ENCODE measurements at regions of chr7 and their contacts with region 1.

Region 1: DNA sequence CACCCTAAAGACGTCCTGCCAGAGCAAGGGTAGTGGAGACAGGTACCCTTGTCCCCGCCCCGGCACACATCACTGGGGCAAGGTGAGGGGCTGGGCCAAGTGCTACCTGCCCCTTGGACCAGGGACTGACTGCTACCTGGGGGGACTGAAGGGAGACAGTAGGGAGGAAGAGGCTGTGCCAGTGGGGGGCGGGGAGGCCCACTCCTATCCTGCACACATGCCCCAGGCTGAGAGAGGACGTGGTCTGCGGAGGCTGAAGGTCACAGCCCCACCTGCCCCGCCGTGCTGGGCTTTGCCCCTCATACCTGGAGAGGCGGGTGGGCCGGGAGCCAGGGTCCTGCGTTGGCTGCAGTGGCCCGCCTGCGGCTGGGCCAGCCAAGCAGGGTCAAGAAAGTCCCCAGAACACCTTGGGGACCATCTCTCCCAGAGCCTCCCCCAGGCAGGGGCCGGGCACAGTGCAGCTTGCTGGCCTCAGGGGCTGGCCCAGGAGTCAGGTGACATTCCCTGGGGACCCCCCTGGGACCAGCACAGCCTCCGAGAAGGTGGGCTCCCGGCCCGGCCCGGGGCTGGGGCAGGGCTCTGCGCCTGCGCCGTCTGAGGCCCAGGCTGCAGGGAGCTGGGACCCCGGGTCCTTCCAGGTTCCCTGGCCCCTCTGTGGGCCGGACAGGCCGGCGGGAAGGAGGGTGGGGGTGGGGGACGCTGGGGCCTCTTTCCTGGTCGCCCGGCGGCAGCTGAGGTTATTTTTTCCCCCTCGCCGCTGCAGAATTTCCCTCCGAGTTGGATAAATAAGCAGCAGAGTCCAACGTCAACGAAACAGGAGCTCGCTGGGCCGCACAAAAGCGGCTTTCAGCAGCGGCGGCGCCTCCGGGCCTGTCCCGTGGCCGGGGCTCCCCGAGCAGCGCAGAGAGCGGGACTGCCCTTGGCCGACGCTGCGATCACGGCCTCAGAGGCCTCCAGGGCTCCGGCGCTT is 9.8 kb upstream of the FZD9 start:
- DNase-seq: peak; percentile 26
- ATAC-seq: peak; percentile 76
- H3K4me3 ChIP-seq: no peak overlapping the region
- H3K27ac ChIP-seq: 0 out of 2 replicates have a peak overlapping the region, but pooled peaks have one; percentile 26
- H3K4me1 ChIP-seq: peaks cover 2% of the 10 kb centered on the region; the same call in 1 of the 2 replicates
- H3K27me3 ChIP-seq: no peaks in the 10 kb centered on the region
- CTCF ChIP-seq: no peak
- POLR2A ChIP-seq: no peak
- RAD21 ChIP-seq: no peak

Region 2: GRCh38 chr7:74312418-74313021 is 888.7 kb after region 1 on chr7:
- CTCF ChIA-PET with region 1: no interaction called
- POLR2A ChIA-PET with region 1: interaction called, 11 read pairs
- dilution Hi-C with region 1: no loop called
- in situ Hi-C with region 1: no loop called
- intact Hi-C with region 1: no loop called
- DNase-seq: no peak
- ATAC-seq: no peak
- H3K4me3 ChIP-seq: no peak overlapping the region
- H3K27ac ChIP-seq: no peak overlapping the region
- H3K4me1 ChIP-seq: peaks cover 3% of the 10 kb centered on the region
- H3K27me3 ChIP-seq: no peaks in the 10 kb centered on the region
- CTCF ChIP-seq: no peak
- POLR2A ChIP-seq: no peak
- RAD21 ChIP-seq: no peak

Measured in IMR-90 (cell line).